ENCODE measurements at regions of chr15 and their contacts with region 1.

Region 1: GRCh38 chr15:90306560-90306959 is 41.1 kb downstream of the NGRN start:
- DNase-seq: peak; percentile 36
- ATAC-seq: peak; percentile 96
- H3K4me3 ChIP-seq: peak overlapping the region; percentile 17; the same call in 1 of the 2 replicates
- H3K27ac ChIP-seq: peak overlapping the region; percentile 60
- H3K4me1 ChIP-seq: peaks cover 22% of the 10 kb centered on the region
- H3K27me3 ChIP-seq: no peaks in the 10 kb centered on the region
- CTCF ChIP-seq: peak in 1 of 3 experiments; percentile 37; a peak in 2 of 6 replicates
- EP300 ChIP-seq: no peak
- POLR2A ChIP-seq: 0 out of 2 replicates have a peak, but pooled peaks have one; percentile 28
- RAD21 ChIP-seq: peak; percentile 39

Region 2: DNA sequence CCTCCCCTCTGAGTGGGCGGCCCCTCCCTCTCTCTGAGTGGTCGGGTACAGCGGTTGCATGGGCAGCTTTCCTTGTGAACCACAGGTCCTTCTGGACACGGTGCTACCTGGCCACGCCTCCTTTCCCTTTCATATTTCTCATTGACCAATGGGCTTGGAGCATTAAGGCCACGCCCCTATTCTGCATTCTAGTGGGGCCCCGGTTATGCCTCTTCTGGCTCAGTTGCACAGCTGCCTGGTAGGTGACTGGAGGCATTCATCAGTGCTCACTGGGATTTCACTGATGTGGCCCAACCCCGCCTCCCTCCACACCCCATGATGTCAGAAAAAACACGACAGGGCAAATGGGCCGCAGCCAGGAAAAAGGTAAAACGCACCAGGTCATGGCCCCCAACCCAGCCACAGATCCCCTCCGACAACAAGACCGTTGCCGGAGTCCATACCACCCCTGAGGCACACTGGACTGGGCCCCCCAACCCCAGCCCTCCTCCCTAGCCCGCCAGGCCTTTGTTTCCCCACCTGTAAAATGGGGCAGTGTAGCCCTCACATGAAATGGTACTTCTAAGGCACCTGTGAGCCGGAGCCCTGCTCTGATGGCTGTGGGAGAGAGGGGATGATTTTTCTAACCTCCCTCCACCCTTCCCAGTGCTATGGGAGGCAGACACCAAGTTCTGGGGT is 14.7 kb before region 1 on chr15:
- CTCF ChIA-PET with region 1: interaction called, 99 read pairs
- POLR2A ChIA-PET with region 1: interaction called, 3 read pairs
- RAD21 ChIA-PET with region 1: interaction called, 9 read pairs
- SMC1A ChIA-PET with region 1: interaction called, 23 read pairs
- in situ Hi-C with region 1: no loop called
- intact Hi-C with region 1: no loop called
- DNase-seq: no peak
- ATAC-seq: peak; percentile 69
- H3K4me3 ChIP-seq: no peak overlapping the region
- H3K27ac ChIP-seq: no peak overlapping the region
- H3K4me1 ChIP-seq: no peaks in the 10 kb centered on the region
- H3K27me3 ChIP-seq: no peaks in the 10 kb centered on the region
- CTCF ChIP-seq: no peak
- EP300 ChIP-seq: no peak
- POLR2A ChIP-seq: no peak
- RAD21 ChIP-seq: no peak

Region 3: GRCh38 chr15:91393186-91393585 is 1086.6 kb after region 1 on chr15:
- CTCF ChIA-PET with region 1: no interaction called
- POLR2A ChIA-PET with region 1: no interaction called
- RAD21 ChIA-PET with region 1: no interaction called
- SMC1A ChIA-PET with region 1: no interaction called
- in situ Hi-C with region 1: no loop called
- intact Hi-C with region 1: no loop called
- DNase-seq: no peak
- ATAC-seq: no peak
- H3K4me3 ChIP-seq: no peak overlapping the region
- H3K27ac ChIP-seq: no peak overlapping the region
- H3K4me1 ChIP-seq: no peaks in the 10 kb centered on the region
- H3K27me3 ChIP-seq: no peaks in the 10 kb centered on the region
- CTCF ChIP-seq: no peak
- EP300 ChIP-seq: no peak
- POLR2A ChIP-seq: no peak
- RAD21 ChIP-seq: no peak